ENCODE measurements at regions of chr19 and their contacts with region 1.

Region 1: GRCh38 chr19:48419158-48419920 is 25.9 kb downstream of the GRIN2D start:
- DNase-seq: peak; percentile 66
- H3K4me3 Mint-ChIP-seq: peak overlapping the region; percentile 75
- H3K27ac Mint-ChIP-seq: peak overlapping the region; percentile 65
- H3K4me1 Mint-ChIP-seq: peaks cover 26% of the 10 kb centered on the region
- H3K27me3 Mint-ChIP-seq: peaks cover 18% of the 10 kb centered on the region

Region 2: GRCh38 chr19:48230555-48231129 is 188.7 kb before region 1 on chr19:
- intact Hi-C with region 1: no loop called
- DNase-seq: peak; percentile 35
- H3K4me3 Mint-ChIP-seq: no peak overlapping the region
- H3K27ac Mint-ChIP-seq: peak overlapping the region; percentile 57
- H3K4me1 Mint-ChIP-seq: peaks cover 26% of the 10 kb centered on the region
- H3K27me3 Mint-ChIP-seq: no peaks in the 10 kb centered on the region

Region 3: DNA sequence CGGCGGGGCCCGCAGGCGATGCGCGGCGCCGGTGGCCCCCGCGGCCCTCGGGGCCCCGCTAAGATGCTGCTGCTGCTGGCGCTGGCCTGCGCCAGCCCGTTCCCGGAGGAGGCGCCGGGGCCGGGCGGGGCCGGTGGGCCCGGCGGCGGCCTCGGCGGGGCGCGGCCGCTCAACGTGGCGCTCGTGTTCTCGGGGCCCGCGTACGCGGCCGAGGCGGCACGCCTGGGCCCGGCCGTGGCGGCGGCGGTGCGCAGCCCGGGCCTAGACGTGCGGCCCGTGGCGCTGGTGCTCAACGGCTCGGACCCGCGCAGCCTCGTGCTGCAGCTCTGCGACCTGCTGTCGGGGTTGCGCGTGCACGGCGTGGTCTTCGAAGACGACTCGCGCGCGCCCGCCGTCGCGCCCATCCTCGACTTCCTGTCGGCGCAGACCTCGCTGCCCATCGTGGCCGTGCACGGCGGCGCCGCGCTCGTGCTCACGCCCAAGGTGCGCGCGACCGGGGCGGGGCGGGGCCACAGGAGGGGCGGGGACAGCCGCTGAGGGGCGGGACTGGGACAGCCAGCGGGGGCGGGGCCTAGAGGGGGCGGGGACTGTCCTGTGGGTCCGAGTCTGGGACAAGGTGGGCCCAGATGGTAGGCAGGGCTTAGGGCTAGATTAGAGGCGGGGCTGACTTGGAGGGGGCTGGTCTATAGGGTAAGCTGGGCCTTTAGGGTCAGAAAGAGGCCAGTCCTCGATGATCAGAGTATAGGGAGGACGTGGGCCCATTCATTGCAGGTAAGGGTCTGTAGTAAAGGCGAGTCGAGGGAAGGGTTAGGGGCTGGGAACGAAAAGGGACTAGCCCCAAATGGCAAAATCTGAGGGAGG is 20.7 kb before region 1 on chr19:
- intact Hi-C with region 1: loop called (anchors 1 kb)
- DNase-seq: peak; percentile 84
- H3K4me3 Mint-ChIP-seq: peak overlapping the region; percentile 53
- H3K27ac Mint-ChIP-seq: peak overlapping the region; percentile 34
- H3K4me1 Mint-ChIP-seq: peaks cover 31% of the 10 kb centered on the region
- H3K27me3 Mint-ChIP-seq: peaks cover 39% of the 10 kb centered on the region

Measured in activated T-helper 1 cell treated with anti-CD3 and anti-CD28 coated beads, Interleukin-12 subunit alpha, Interleukin-12 subunit beta, Interleukin-2, Interleukin-4 antibody, amounts not matched to agents 30 ng/mL and 10 ng/mL and 1 ng/mL, durations not matched to agents 14 hours and 24 hours and 36 hours (primary cell).